GM12878 (cell line): ENCODE measurements at regions of chr16 and their contacts with region 1.

Region 1: GRCh38 chr16:8594149-8594666 is 3.9 kb upstream of the TMEM114 start:
- DNase-seq: no peak
- ATAC-seq: peak; percentile 68
- H3K4me3 ChIP-seq: no peak overlapping the region
- H3K27ac ChIP-seq: no peak overlapping the region
- H3K4me1 ChIP-seq: no peaks in the 10 kb centered on the region
- H3K27me3 ChIP-seq: peaks cover 4 to 6% of the 10 kb centered on the region in 2 experiments; a peak in 2 of 4 replicates
- CTCF ChIP-seq: no peak
- EP300 ChIP-seq: 0 out of 4 replicates have a peak, but pooled peaks of 1 of the 2 experiments have one; percentile 13
- POLR2A ChIP-seq: no peak
- RAD21 ChIP-seq: no peak

Region 2: DNA sequence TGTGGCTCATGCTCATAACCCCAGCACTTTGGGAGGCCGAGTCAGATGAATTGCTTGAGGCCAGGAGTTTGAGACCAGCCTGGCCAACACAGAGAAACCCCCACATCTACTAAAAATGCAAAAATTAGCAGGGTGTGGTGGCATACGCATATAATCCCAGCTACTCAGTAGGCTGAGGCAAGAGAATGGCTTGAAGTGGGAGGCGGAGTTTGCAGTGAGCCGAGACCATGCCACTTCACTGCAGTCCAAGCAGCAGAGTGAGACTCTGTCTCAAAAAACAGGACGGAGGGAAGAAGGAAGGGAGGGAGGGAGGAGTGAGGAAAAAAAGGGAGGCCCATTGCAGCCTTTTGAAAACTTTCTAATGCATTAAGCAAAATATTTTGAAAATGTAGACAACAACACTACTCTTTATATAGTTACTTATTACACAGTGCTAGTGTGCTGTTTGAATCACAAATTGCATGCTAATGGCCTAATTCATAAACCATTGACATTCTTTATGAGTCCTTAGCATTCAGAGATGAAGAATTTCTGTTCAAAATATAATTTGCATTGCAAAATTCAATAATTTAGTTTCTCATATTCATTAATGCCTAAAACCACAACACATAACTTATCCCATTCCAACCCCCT is 63.3 kb before region 1 on chr16:
- CTCF ChIA-PET with region 1: no interaction called
- POLR2A ChIA-PET with region 1: no interaction called
- RAD21 ChIA-PET with region 1: no interaction called
- SMC1A ChIA-PET with region 1: no interaction called
- in situ Hi-C with region 1: no loop called
- intact Hi-C with region 1: no loop called
- DNase-seq: no peak
- ATAC-seq: no peak
- H3K4me3 ChIP-seq: no peak overlapping the region
- H3K27ac ChIP-seq: no peak overlapping the region
- H3K4me1 ChIP-seq: no peaks in the 10 kb centered on the region
- H3K27me3 ChIP-seq: no peaks in the 10 kb centered on the region; a peak in 1 of 4 replicates
- CTCF ChIP-seq: no peak
- EP300 ChIP-seq: no peak
- POLR2A ChIP-seq: no peak
- RAD21 ChIP-seq: no peak

Region 3: DNA sequence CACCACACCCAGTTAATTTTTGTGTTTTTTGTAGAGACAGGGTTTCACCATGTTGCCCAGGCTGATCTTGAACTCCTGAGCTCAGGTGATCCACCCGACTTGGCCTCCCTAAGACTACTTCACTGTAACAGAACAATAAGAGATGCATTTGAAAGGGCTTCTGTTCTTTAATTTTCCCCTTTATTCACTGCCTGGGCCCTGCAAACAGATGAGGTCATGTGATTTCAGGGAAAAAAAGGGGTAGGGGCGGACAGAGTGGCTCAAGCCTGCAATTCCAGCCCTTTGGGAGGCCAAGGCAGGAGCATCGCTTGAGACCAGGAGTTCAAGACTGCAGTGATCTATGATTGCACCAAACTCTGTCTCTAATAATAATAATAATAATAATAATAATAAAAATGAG is 40.2 kb before region 1 on chr16:
- CTCF ChIA-PET with region 1: no interaction called
- POLR2A ChIA-PET with region 1: interaction called, 10 read pairs
- RAD21 ChIA-PET with region 1: no interaction called
- SMC1A ChIA-PET with region 1: no interaction called
- in situ Hi-C with region 1: no loop called
- intact Hi-C with region 1: no loop called
- DNase-seq: no peak
- ATAC-seq: no peak
- H3K4me3 ChIP-seq: no peak overlapping the region
- H3K27ac ChIP-seq: no peak overlapping the region
- H3K4me1 ChIP-seq: no peaks in the 10 kb centered on the region
- H3K27me3 ChIP-seq: no peaks in the 10 kb centered on the region
- CTCF ChIP-seq: no peak
- EP300 ChIP-seq: no peak
- POLR2A ChIP-seq: no peak
- RAD21 ChIP-seq: no peak

Region 4: GRCh38 chr16:8685994-8686621 is 91.9 kb after region 1 on chr16:
- CTCF ChIA-PET with region 1: no interaction called
- POLR2A ChIA-PET with region 1: no interaction called
- RAD21 ChIA-PET with region 1: no interaction called
- SMC1A ChIA-PET with region 1: no interaction called
- in situ Hi-C with region 1: no loop called
- intact Hi-C with region 1: no loop called
- DNase-seq: no peak
- ATAC-seq: peak; percentile 36; the same call in 2 of the 3 replicates
- H3K4me3 ChIP-seq: no peak overlapping the region
- H3K27ac ChIP-seq: no peak overlapping the region
- H3K4me1 ChIP-seq: no peaks in the 10 kb centered on the region
- H3K27me3 ChIP-seq: no peaks in the 10 kb centered on the region
- CTCF ChIP-seq: no peak
- EP300 ChIP-seq: no peak
- POLR2A ChIP-seq: no peak
- RAD21 ChIP-seq: no peak

Region 5: DNA sequence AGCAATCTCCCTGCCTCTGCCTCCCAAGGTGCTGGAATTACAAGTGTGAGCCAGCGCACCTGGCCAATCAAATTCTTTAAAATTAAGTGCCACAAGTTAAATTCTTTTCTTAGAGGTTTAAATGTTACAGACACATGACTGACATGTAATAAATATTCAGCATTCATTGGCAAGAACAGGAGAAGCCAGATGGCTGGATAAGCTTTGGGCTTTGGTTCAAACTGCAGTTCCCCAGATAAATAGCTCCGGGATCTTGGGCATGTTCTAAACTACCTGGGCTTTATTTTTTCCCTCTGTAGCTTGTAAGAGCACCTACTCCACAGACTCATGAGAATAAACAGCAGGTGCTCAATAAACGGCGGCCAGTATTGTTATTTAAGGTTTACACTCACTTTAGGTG is 114.3 kb after region 1 on chr16:
- CTCF ChIA-PET with region 1: no interaction called
- POLR2A ChIA-PET with region 1: no interaction called
- RAD21 ChIA-PET with region 1: no interaction called
- SMC1A ChIA-PET with region 1: no interaction called
- in situ Hi-C with region 1: no loop called
- intact Hi-C with region 1: no loop called
- DNase-seq: no peak
- ATAC-seq: no peak
- H3K4me3 ChIP-seq: no peak overlapping the region
- H3K27ac ChIP-seq: no peak overlapping the region
- H3K4me1 ChIP-seq: no peaks in the 10 kb centered on the region
- H3K27me3 ChIP-seq: no peaks in the 10 kb centered on the region
- CTCF ChIP-seq: no peak
- EP300 ChIP-seq: no peak
- POLR2A ChIP-seq: no peak
- RAD21 ChIP-seq: no peak